ENCODE measurements at regions of chr10 and their contacts with region 1.

Region 1: DNA sequence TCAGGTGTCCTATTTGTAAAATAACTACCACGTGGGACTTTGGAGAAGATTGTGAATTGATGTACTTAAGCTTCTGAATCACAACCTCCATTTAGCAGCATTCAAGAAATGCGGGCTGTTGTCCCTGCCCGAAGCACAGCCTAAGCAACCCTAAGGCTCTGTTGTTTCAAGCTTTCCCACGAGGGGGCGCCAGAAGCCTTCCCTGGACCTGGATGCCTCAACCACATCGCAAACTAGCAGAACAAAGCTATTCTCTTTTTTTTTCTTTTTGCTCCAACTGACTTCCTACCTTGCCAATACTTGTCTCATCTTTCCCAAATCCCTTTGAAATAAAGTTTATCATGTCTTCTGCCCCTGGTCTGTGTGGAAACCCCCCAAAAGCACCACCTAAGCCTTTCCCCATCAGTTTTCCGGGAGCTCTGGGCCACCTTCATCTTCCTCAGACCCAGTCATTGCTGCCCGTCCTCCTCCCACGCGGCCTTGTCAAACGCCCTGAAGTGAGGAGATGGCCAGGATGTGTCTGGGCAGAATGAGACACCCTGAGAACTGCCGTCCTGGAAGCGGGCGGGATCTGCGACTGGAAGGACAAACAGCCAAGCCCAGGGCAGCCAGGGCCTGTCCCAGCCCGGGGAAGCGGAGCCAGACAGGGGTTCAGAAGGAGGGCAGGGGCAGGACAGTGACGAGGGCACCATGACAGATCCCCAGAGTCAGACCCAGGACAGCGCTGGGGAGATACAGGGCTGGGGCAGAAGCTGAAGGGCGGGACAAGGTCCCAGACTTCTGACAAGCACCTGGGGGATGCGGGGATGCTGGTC is 112.7 kb downstream of the SLIT1 start:
- DNase-seq: peak; percentile 86
- ATAC-seq: peak; percentile 74
- H3K4me3 Mint-ChIP-seq: no peak overlapping the region
- H3K27ac Mint-ChIP-seq: no peak overlapping the region
- H3K4me1 Mint-ChIP-seq: peaks cover 12% of the 10 kb centered on the region
- H3K27me3 Mint-ChIP-seq: peaks cover 12% of the 10 kb centered on the region

Region 2: GRCh38 chr10:96991313-96991841 is 81.7 kb before region 1 on chr10:
- CTCF ChIA-PET with region 1: no interaction called
- DNase-seq: no peak
- ATAC-seq: no peak
- H3K4me3 Mint-ChIP-seq: no peak overlapping the region
- H3K27ac Mint-ChIP-seq: no peak overlapping the region
- H3K4me1 Mint-ChIP-seq: peaks cover 10% of the 10 kb centered on the region
- H3K27me3 Mint-ChIP-seq: no peaks in the 10 kb centered on the region

Region 3: GRCh38 chr10:97059006-97059871 is 13.8 kb before region 1 on chr10:
- CTCF ChIA-PET with region 1: interaction called, 23 read pairs
- DNase-seq: no peak
- ATAC-seq: no peak
- H3K4me3 Mint-ChIP-seq: no peak overlapping the region
- H3K27ac Mint-ChIP-seq: no peak overlapping the region
- H3K4me1 Mint-ChIP-seq: no peaks in the 10 kb centered on the region
- H3K27me3 Mint-ChIP-seq: no peaks in the 10 kb centered on the region

Region 4: GRCh38 chr10:97117372-97117771 is 44.3 kb after region 1 on chr10:
- CTCF ChIA-PET with region 1: interaction called, 40 read pairs
- DNase-seq: no peak
- ATAC-seq: no peak
- H3K4me3 Mint-ChIP-seq: no peak overlapping the region
- H3K27ac Mint-ChIP-seq: no peak overlapping the region
- H3K4me1 Mint-ChIP-seq: no peaks in the 10 kb centered on the region
- H3K27me3 Mint-ChIP-seq: peaks cover 21% of the 10 kb centered on the region

Region 5: GRCh38 chr10:97196223-97197029 is 123.4 kb after region 1 on chr10:
- CTCF ChIA-PET with region 1: interaction called, 33 read pairs
- DNase-seq: peak; percentile 81
- ATAC-seq: peak; percentile 90
- H3K4me3 Mint-ChIP-seq: peak overlapping the region; percentile 56
- H3K27ac Mint-ChIP-seq: no peak overlapping the region
- H3K4me1 Mint-ChIP-seq: peaks cover 17% of the 10 kb centered on the region
- H3K27me3 Mint-ChIP-seq: peaks cover 48% of the 10 kb centered on the region

Region 6: GRCh38 chr10:97210543-97210961 is 137.5 kb after region 1 on chr10:
- CTCF ChIA-PET with region 1: interaction called, 158 read pairs
- DNase-seq: peak; percentile 77
- ATAC-seq: peak; percentile 77
- H3K4me3 Mint-ChIP-seq: no peak overlapping the region
- H3K27ac Mint-ChIP-seq: no peak overlapping the region
- H3K4me1 Mint-ChIP-seq: no peaks in the 10 kb centered on the region
- H3K27me3 Mint-ChIP-seq: no peaks in the 10 kb centered on the region

Region 7: DNA sequence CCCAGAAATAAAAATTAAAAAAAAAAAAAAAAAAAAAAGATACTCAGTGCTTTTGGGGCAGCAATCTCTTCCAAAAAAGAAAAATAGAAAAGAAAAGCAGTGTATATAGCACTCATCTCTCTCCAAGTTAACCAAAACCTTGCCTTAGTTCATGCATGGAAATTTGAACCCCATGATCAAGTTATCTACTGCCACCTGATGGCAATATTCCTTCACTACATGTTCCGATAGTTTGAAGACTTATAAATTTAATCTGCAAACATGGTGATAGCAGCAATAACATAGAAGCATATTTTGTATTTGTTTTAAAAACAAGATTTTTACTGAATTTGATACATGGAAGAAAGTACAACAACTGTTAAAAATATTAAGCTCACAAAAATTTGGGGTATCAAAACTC is 161.3 kb after region 1 on chr10:
- CTCF ChIA-PET with region 1: interaction called, 28 read pairs
- DNase-seq: no peak
- ATAC-seq: no peak
- H3K4me3 Mint-ChIP-seq: no peak overlapping the region
- H3K27ac Mint-ChIP-seq: no peak overlapping the region
- H3K4me1 Mint-ChIP-seq: peaks cover 14% of the 10 kb centered on the region
- H3K27me3 Mint-ChIP-seq: no peaks in the 10 kb centered on the region

Measured in activated CD8-positive, alpha-beta memory T cell treated with anti-CD3 and anti-CD28 coated beads, Interleukin-2, amount 10 ng/mL, durations not matched to agents 7 days and 5 days (primary cell).